ENCODE measurements at regions of chr16 and their contacts with region 1.

Region 1: DNA sequence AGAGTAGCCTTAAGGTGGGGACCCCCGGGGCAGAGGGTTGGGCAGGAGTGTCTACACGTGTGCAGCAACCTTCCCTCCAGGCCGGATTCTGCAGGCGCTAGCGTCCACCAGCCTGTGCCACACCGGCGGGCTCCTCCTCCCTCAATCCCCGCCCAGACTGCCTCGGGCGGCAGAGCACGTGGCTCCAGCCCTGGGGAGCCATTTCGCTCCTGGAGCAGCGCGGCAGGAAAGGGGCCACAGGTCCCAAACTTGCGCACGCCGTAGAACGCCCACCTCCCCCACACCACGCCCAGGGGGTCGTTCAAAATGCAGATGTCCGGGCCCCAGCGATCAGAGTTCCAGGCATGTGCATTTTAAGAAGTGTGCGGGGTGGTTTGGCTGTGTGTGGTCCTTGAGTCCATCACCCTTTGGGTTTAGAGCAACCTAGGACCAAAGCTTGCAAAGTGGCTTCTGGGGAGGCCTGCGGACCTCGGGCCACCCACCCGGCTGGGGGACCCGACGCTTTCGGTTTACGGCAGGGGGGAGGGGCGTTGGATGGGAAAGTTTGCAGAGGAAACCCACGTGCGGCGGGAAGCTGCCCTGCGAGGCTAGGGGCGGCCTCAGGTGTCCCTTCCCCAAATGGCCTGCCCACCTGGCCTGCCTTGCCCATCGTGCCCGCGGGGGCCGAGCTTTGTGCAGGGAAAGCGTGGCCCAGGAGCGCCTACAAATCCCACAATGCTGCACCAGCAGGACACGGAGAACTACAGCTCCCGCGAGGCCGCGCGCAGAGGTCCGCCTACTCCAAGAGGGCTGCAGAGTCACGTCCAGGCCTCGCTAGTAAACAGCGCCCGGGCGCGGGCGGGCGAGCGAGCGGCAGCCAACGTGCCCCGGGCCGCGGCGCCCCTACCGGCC is 1.4 kb downstream of the TFAP4 start:
- DNase-seq: peak; percentile 90
- H3K4me3 ChIP-seq: peak overlapping the region; percentile 65 to 84
- H3K27ac ChIP-seq: peak overlapping the region; percentile 79 to 91
- H3K4me1 ChIP-seq: peaks cover 0 to 12% of the 10 kb centered on the region in 2 experiments; a peak in 1 of 4 replicates
- H3K27me3 ChIP-seq: no peaks in the 10 kb centered on the region
- CTCF ChIP-seq: no peak
- EP300 ChIP-seq: no peak
- RAD21 ChIP-seq: no peak

Region 2: GRCh38 chr16:4064950-4065352 is 206.5 kb before region 1 on chr16:
- CTCF ChIA-PET with region 1: no interaction called
- POLR2A ChIA-PET with region 1: no interaction called
- DNase-seq: no peak
- H3K4me3 ChIP-seq: no peak overlapping the region
- H3K27ac ChIP-seq: no peak overlapping the region
- H3K4me1 ChIP-seq: peaks cover 0 to 5% of the 10 kb centered on the region in 2 experiments; a peak in 1 of 4 replicates
- H3K27me3 ChIP-seq: no peaks in the 10 kb centered on the region
- CTCF ChIP-seq: no peak
- EP300 ChIP-seq: no peak
- RAD21 ChIP-seq: no peak

Region 3: GRCh38 chr16:4288148-4288921 is 16.9 kb after region 1 on chr16:
- CTCF ChIA-PET with region 1: interaction called, 23 read pairs
- POLR2A ChIA-PET with region 1: interaction called, 21 read pairs
- DNase-seq: peak; percentile 91
- H3K4me3 ChIP-seq: no peak overlapping the region
- H3K27ac ChIP-seq: no peak overlapping the region
- H3K4me1 ChIP-seq: peaks cover 0 to 10% of the 10 kb centered on the region in 2 experiments; a peak in 1 of 4 replicates
- H3K27me3 ChIP-seq: no peaks in the 10 kb centered on the region
- CTCF ChIP-seq: peak; percentile 95
- EP300 ChIP-seq: no peak
- RAD21 ChIP-seq: peak; percentile 83

Region 4: DNA sequence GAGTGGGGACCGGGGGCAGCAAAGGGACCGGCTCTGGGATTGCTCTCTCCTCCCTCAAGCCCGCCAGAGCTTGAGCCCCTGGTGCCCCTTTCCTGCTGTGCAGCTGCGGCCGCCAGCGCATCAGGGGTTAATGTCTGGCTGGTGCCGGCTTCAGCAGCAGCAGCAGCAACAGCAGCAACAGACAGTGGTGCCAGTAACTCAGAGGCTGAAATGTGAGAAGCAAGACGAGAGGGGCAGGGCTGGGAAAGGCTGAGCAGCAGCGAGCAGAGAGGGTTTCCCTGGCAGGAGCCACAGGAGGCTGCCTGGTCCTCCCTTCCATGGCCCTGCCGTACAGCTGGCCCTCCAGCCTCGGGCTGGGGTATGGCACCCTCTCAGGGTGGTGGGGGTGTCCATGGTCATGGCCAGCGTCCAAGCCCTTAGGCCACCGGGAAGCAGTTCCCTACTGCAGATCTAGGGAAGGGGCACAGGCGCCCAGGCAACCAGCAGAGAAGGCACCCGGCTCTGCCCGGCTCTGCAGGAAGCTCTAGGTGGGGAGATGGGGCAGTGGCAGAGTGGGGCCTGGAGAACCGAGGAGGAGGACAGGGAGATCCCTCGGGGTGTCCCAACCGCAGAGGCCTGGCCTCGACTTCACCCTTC is 22.5 kb after region 1 on chr16:
- CTCF ChIA-PET with region 1: interaction called, 23 read pairs
- POLR2A ChIA-PET with region 1: interaction called, 21 read pairs
- DNase-seq: peak; percentile 93
- H3K4me3 ChIP-seq: peak overlapping the region in 1 of 2 experiments; percentile 6; a peak in 2 of 4 replicates
- H3K27ac ChIP-seq: peak overlapping the region; percentile 60 to 87
- H3K4me1 ChIP-seq: peaks cover 10 to 20% of the 10 kb centered on the region in 2 experiments; a peak in 3 of 4 replicates
- H3K27me3 ChIP-seq: no peaks in the 10 kb centered on the region
- CTCF ChIP-seq: no peak
- EP300 ChIP-seq: peak in 1 of 2 experiments; percentile 73; a peak in 3 of 4 replicates
- RAD21 ChIP-seq: peak; percentile 17; the same call in 1 of the 2 replicates

Region 5: GRCh38 chr16:4307215-4308037 is 36.0 kb after region 1 on chr16:
- CTCF ChIA-PET with region 1: interaction called, 14 read pairs
- POLR2A ChIA-PET with region 1: interaction called, 4 read pairs
- DNase-seq: peak; percentile 99
- H3K4me3 ChIP-seq: peak overlapping the region; percentile 52 to 56
- H3K27ac ChIP-seq: peak overlapping the region; percentile 39 to 77; a peak in 3 of 4 replicates
- H3K4me1 ChIP-seq: peaks cover 0 to 16% of the 10 kb centered on the region in 2 experiments; a peak in 1 of 4 replicates
- H3K27me3 ChIP-seq: no peaks in the 10 kb centered on the region
- CTCF ChIP-seq: no peak
- EP300 ChIP-seq: no peak
- RAD21 ChIP-seq: no peak

Region 6: DNA sequence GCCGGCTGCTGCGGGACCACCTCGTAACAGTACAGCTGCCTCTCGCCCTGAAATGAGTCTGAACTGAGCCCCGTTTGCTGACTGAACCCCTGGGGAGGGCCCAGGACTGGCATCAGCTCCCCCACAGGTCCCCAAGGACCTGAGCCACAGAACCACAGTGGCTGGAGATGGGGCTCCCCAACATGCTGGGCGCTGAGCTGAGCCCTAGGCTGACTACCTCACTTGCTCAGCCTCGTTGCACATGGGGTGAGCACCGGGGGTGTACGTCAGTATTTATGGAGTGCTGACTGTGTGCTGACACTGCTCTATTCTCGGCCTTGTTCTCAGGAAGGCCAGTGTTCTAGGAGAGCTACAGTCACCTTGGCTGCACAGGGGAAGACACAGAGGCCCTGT is 93.6 kb after region 1 on chr16:
- CTCF ChIA-PET with region 1: no interaction called
- POLR2A ChIA-PET with region 1: no interaction called
- DNase-seq: no peak
- H3K4me3 ChIP-seq: no peak overlapping the region
- H3K27ac ChIP-seq: no peak overlapping the region
- H3K4me1 ChIP-seq: peaks cover 7 to 34% of the 10 kb centered on the region in 2 experiments; a peak in 3 of 4 replicates
- H3K27me3 ChIP-seq: no peaks in the 10 kb centered on the region
- CTCF ChIP-seq: no peak
- EP300 ChIP-seq: no peak
- RAD21 ChIP-seq: no peak